Activated CD4-positive, alpha-beta T cell treated with anti-CD3 and anti-CD28 coated beads, Interleukin-2, amount 10 ng/mL, durations not matched to agents 7 days and 5 days (primary cell): ENCODE measurements at regions of chr7 and their contacts with region 1.

Region 1: DNA sequence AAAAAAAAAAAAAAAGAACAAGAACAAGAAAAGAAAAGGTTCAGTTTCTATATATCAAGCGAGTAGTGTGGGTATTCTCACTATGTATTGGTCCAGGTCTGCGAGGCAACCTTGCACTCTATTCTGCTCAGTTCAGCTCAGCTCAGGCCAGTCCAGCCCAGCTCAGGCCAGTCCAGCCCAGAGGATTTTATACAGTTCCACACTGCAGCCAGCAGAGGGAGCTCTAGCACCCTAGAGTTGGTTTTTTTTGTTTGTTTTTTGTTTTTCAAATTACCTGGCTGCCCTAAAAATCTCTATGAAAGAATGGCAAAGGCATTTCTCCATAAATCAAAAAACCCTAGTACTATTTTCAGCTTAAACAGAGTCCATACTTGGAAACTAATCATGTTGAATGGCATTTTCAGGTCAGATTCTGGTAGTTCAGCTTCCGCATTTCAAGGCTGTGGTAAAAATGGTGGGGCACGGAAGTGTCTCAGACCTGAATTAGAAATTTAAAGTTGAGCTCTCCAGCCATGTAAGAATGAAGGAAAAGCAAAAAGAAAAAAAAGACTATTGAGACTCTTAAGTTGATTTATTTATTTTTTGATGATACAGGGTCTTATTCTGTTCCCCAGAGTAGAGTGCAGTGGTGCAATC is 55.2 kb upstream of the GSDME start:
- DNase-seq: peak; percentile 53
- H3K4me3 Mint-ChIP-seq: no peak overlapping the region
- H3K27ac Mint-ChIP-seq: no peak overlapping the region
- H3K4me1 Mint-ChIP-seq: no peaks in the 10 kb centered on the region
- H3K27me3 Mint-ChIP-seq: no peaks in the 10 kb centered on the region

Region 2: GRCh38 chr7:24521917-24522620 is 290.4 kb before region 1 on chr7:
- CTCF ChIA-PET with region 1: no interaction called
- POLR2A ChIA-PET with region 1: no interaction called
- DNase-seq: no peak
- H3K4me3 Mint-ChIP-seq: no peak overlapping the region
- H3K27ac Mint-ChIP-seq: no peak overlapping the region
- H3K4me1 Mint-ChIP-seq: no peaks in the 10 kb centered on the region
- H3K27me3 Mint-ChIP-seq: peaks cover 29% of the 10 kb centered on the region

Region 3: GRCh38 chr7:24979863-24980533 is 167.6 kb after region 1 on chr7 and contains the start of gene OSBPL3:
- CTCF ChIA-PET with region 1: interaction called, 14 read pairs
- POLR2A ChIA-PET with region 1: no interaction called
- DNase-seq: peak; percentile 94
- H3K4me3 Mint-ChIP-seq: peak within 1 kb of the TSS; percentile 92
- H3K27ac Mint-ChIP-seq: peak within 1 kb of the TSS; percentile 93
- H3K4me1 Mint-ChIP-seq: peaks cover 62% of the 10 kb centered on the region
- H3K27me3 Mint-ChIP-seq: peaks cover 8% of the 10 kb centered on the region
- total RNA-seq, gene OSBPL3: 77.5 to 77.9 TPM

Region 4: DNA sequence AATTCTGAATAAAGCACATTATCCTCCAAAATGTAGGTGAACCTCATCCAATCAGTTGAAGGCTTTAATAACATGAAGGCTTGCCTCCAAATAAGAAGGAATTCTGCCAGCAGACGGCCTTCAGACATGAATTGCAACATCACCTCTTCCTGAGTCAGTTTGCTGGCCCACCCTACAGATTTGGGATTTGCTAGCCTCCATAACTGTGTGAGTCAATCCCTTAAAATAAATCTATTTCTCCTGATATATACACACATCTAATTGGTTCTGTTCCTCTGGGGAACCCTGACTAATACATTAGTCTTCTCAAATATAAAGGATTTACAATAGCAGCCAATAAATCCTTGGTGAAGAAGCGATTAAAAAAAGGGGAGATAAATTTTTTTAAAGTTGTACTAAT is 202.3 kb after region 1 on chr7:
- CTCF ChIA-PET with region 1: no interaction called
- POLR2A ChIA-PET with region 1: interaction called, 13 read pairs
- DNase-seq: no peak
- H3K4me3 Mint-ChIP-seq: no peak overlapping the region
- H3K27ac Mint-ChIP-seq: no peak overlapping the region
- H3K4me1 Mint-ChIP-seq: no peaks in the 10 kb centered on the region
- H3K27me3 Mint-ChIP-seq: peaks cover 7% of the 10 kb centered on the region

Region 5: DNA sequence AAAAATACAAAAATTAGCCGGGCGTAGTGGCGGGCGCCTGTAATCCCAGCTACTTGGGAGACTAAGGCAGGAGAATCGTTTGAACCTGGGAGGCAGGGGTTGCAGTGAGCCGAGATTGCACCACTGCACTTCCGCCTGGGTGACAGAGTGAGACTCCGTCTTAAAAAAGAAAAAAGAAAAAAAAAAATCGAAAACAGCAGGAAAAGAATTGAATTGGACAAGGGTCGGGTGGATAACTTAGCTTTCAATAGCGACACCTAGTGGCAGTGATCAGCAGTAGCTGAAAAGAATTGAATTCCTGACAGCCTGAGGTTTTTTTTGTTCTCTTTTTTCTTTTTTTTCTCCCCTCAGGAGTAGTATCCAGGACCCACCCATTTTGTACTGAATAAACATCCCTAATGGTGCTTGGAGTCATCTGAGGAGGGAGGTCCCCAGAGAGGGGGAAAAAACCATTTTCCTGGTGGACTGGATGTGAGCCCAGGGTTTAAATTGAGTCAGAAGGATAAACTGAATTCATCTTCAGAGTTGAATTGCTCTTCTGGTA is 257.5 kb after region 1 on chr7:
- CTCF ChIA-PET with region 1: interaction called, 11 read pairs
- POLR2A ChIA-PET with region 1: no interaction called
- DNase-seq: peak; percentile 74
- H3K4me3 Mint-ChIP-seq: no peak overlapping the region
- H3K27ac Mint-ChIP-seq: no peak overlapping the region
- H3K4me1 Mint-ChIP-seq: peaks cover 21% of the 10 kb centered on the region
- H3K27me3 Mint-ChIP-seq: no peaks in the 10 kb centered on the region

Region 6: GRCh38 chr7:25093268-25093826 is 280.9 kb after region 1 on chr7:
- CTCF ChIA-PET with region 1: interaction called, 28 read pairs
- POLR2A ChIA-PET with region 1: no interaction called
- DNase-seq: peak; percentile 82
- H3K4me3 Mint-ChIP-seq: no peak overlapping the region
- H3K27ac Mint-ChIP-seq: no peak overlapping the region
- H3K4me1 Mint-ChIP-seq: peaks cover 12% of the 10 kb centered on the region
- H3K27me3 Mint-ChIP-seq: peaks cover 9% of the 10 kb centered on the region

Region 7: GRCh38 chr7:25098096-25099046 is 285.9 kb after region 1 on chr7:
- CTCF ChIA-PET with region 1: interaction called, 28 read pairs
- POLR2A ChIA-PET with region 1: no interaction called
- DNase-seq: peak; percentile 72
- H3K4me3 Mint-ChIP-seq: no peak overlapping the region
- H3K27ac Mint-ChIP-seq: no peak overlapping the region
- H3K4me1 Mint-ChIP-seq: peaks cover 10% of the 10 kb centered on the region
- H3K27me3 Mint-ChIP-seq: peaks cover 9% of the 10 kb centered on the region